CD8-positive, alpha-beta T cell (primary cell): ENCODE measurements at regions of chr15 and their contacts with region 1.

Region 1: GRCh38 chr15:63600616-63601025 is 3.4 kb downstream of the FBXL22 start:
- DNase-seq: peak; percentile 79 to 98 (median 90)
- ATAC-seq: peak; percentile 80
- H3K4me3 ChIP-seq: peak overlapping the region; percentile 87 to 96
- H3K4me3 Mint-ChIP-seq: peak overlapping the region; percentile 94
- H3K27ac ChIP-seq: peak overlapping the region; percentile 75 to 87
- H3K27ac Mint-ChIP-seq: peak overlapping the region; percentile 94
- H3K4me1 ChIP-seq: peaks cover 29% of the 10 kb centered on the region
- H3K4me1 Mint-ChIP-seq: peaks cover 56% of the 10 kb centered on the region
- H3K27me3 ChIP-seq: no peaks in the 10 kb centered on the region
- H3K27me3 Mint-ChIP-seq: no peaks in the 10 kb centered on the region
- CTCF ChIP-seq: no peak

Region 2: DNA sequence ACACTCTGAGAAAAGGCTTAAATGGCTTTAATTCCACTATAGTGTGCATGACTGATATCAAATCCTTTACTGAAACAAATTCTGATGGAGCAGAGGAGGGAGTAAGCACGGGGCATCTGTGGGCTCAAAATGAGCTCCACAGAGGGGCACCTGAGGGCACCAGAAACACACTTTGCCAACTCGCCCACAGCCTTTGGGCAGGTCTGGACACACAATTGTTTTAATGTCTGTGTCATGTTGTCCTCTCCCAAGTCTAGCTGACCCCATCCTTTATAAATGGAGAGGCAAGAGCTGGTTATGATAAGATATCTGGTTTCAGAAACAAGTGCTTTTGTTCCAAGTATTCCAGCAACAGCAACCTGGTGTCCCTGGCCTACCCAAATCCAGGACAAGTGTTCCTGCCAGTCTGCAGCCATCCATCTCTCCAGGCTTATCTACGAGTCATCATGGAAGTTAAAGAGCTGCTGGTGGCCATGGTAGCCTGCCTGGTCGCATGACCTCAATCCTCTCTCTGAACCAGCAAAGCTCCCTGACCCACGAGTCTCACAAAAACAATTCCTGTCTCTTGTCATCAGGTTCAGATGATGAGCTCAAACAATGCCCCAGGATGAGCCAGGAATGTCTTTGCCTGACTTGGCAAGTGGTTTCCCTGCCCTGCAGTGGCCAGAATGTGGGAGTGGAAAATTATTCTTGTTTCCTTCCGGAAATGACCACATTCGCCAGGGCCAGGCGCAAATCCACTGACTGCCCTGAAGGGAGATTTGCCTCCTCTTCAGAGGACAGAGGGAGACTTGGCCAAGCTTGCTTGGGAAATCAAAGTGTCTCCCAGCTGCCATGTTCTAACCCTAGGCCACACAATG is 622.4 kb before region 1 on chr15:
- CTCF ChIA-PET with region 1: no interaction called
- POLR2A ChIA-PET with region 1: no interaction called
- intact Hi-C with region 1: no loop called
- DNase-seq: no peak
- ATAC-seq: no peak
- H3K4me3 ChIP-seq: no peak overlapping the region
- H3K4me3 Mint-ChIP-seq: no peak overlapping the region
- H3K27ac ChIP-seq: no peak overlapping the region
- H3K27ac Mint-ChIP-seq: no peak overlapping the region
- H3K4me1 ChIP-seq: no peaks in the 10 kb centered on the region
- H3K4me1 Mint-ChIP-seq: no peaks in the 10 kb centered on the region
- H3K27me3 ChIP-seq: peaks cover 0 to 3% of the 10 kb centered on the region in 2 experiments
- H3K27me3 Mint-ChIP-seq: peaks cover 9% of the 10 kb centered on the region
- CTCF ChIP-seq: no peak

Region 3: DNA sequence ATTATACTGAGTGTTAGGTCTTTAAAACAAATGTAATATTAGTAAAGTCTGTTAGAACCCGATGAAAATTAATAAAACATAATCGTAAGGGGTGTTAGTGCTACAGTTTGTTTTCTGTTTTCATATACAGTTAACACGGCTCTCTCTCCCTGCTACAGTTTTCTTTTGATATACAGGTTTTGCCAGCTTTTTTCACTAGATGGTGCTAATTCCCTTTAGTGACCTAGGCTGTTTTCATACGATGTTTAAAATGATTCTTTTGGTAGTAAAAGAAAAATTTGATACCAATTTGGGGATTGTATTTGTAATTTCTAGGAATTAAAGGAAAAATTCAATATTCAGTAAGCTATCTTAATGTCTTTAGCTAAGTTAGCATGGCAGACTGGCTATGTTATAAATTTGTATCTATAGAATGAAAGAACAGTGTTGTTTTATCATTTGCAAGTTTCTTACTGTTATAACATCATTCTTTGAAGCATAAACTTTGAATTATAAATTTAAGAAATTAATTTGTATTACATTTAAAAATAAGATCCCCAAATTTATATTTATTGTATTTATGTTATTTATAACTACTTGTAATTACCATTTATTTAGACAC is 311.7 kb before region 1 on chr15:
- CTCF ChIA-PET with region 1: no interaction called
- POLR2A ChIA-PET with region 1: no interaction called
- intact Hi-C with region 1: loop called (anchors 5 to 10 kb)
- DNase-seq: peak in 2 of 9 experiments; percentile 57 to 72
- ATAC-seq: peak; percentile 75
- H3K4me3 ChIP-seq: no peak overlapping the region
- H3K4me3 Mint-ChIP-seq: no peak overlapping the region
- H3K27ac ChIP-seq: peak overlapping the region in 1 of 2 experiments; percentile 0
- H3K27ac Mint-ChIP-seq: no peak overlapping the region
- H3K4me1 ChIP-seq: peaks cover 7% of the 10 kb centered on the region
- H3K4me1 Mint-ChIP-seq: peaks cover 7% of the 10 kb centered on the region
- H3K27me3 ChIP-seq: no peaks in the 10 kb centered on the region
- H3K27me3 Mint-ChIP-seq: no peaks in the 10 kb centered on the region
- CTCF ChIP-seq: peak; percentile 81

Region 4: DNA sequence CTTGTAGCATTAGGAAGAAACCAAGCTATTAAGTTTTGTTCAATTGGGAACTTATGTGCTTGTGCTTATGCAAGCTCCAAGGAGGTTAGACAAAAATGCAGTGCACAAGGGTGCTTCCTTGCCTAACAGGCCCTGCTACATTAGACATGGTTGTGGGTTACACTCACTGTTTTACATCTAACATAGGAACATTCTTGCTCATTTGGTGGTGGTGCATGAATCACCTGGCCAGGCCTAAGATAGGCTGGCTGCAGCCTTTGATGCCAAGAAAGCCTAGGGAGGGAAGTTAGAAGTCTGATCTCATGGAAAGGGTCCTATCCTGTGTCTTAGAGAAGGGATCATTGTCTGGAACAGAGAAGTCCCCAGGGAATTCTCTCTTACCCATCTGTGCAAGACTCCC is 262.5 kb before region 1 on chr15:
- CTCF ChIA-PET with region 1: no interaction called
- POLR2A ChIA-PET with region 1: no interaction called
- intact Hi-C with region 1: no loop called
- DNase-seq: no peak
- ATAC-seq: no peak
- H3K4me3 ChIP-seq: no peak overlapping the region
- H3K4me3 Mint-ChIP-seq: no peak overlapping the region
- H3K27ac ChIP-seq: no peak overlapping the region
- H3K27ac Mint-ChIP-seq: no peak overlapping the region
- H3K4me1 ChIP-seq: no peaks in the 10 kb centered on the region
- H3K4me1 Mint-ChIP-seq: no peaks in the 10 kb centered on the region
- H3K27me3 ChIP-seq: no peaks in the 10 kb centered on the region
- H3K27me3 Mint-ChIP-seq: peaks cover 2% of the 10 kb centered on the region
- CTCF ChIP-seq: no peak

Region 5: GRCh38 chr15:63497642-63498467 is 102.8 kb before region 1 on chr15:
- CTCF ChIA-PET with region 1: interaction called, 3 read pairs
- POLR2A ChIA-PET with region 1: interaction called, 12 read pairs
- intact Hi-C with region 1: no loop called
- DNase-seq: peak; percentile 48 to 95 (median 79)
- ATAC-seq: peak; percentile 69
- H3K4me3 ChIP-seq: peak overlapping the region; percentile 28 to 37
- H3K4me3 Mint-ChIP-seq: no peak overlapping the region
- H3K27ac ChIP-seq: peak overlapping the region; percentile 57 to 94
- H3K27ac Mint-ChIP-seq: no peak overlapping the region
- H3K4me1 ChIP-seq: peaks cover 91% of the 10 kb centered on the region
- H3K4me1 Mint-ChIP-seq: peaks cover 79% of the 10 kb centered on the region
- H3K27me3 ChIP-seq: no peaks in the 10 kb centered on the region
- H3K27me3 Mint-ChIP-seq: no peaks in the 10 kb centered on the region
- CTCF ChIP-seq: no peak

Region 6: DNA sequence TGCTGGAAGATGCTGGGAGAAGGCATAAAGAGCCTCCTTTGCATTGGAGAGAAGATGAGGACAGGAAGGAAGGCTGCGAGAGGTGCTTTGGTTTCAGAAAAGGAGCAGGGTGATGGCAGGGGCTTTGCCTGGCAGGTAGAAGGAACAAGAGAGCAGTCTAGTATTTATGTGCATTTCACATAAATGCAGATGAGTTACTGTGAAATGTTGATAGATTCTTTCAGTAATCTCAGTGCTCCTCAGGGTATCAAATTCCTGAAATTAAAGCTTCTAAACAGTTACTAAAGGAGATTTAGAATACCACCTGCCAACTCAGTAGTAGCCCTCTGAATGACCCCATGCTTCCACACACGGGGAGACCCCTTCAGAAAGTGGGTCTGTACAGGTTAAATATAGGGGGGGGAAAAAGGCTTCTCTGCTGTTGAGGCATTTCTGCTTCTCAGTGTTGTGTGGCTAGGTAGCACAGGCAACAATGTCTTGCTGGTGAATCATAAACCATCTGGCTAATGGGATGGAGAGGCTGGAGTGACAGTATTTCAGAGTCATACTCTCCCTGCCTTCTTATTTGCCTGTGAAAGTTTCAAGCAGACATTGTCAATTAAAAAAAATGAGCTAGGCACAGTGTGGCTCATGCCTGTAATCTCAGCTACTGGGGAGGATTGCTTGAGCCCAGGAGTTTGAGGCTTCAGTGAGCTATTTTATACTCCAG is 17.7 kb before region 1 on chr15:
- CTCF ChIA-PET with region 1: interaction called, 4 read pairs
- POLR2A ChIA-PET with region 1: no interaction called
- intact Hi-C with region 1: loop called in 1 of 2 experiments (anchors 2 kb)
- DNase-seq: no peak
- ATAC-seq: no peak
- H3K4me3 ChIP-seq: no peak overlapping the region
- H3K4me3 Mint-ChIP-seq: no peak overlapping the region
- H3K27ac ChIP-seq: no peak overlapping the region
- H3K27ac Mint-ChIP-seq: peak overlapping the region; percentile 63
- H3K4me1 ChIP-seq: no peaks in the 10 kb centered on the region
- H3K4me1 Mint-ChIP-seq: peaks cover 11% of the 10 kb centered on the region
- H3K27me3 ChIP-seq: no peaks in the 10 kb centered on the region
- H3K27me3 Mint-ChIP-seq: no peaks in the 10 kb centered on the region
- CTCF ChIP-seq: no peak

Region 7: DNA sequence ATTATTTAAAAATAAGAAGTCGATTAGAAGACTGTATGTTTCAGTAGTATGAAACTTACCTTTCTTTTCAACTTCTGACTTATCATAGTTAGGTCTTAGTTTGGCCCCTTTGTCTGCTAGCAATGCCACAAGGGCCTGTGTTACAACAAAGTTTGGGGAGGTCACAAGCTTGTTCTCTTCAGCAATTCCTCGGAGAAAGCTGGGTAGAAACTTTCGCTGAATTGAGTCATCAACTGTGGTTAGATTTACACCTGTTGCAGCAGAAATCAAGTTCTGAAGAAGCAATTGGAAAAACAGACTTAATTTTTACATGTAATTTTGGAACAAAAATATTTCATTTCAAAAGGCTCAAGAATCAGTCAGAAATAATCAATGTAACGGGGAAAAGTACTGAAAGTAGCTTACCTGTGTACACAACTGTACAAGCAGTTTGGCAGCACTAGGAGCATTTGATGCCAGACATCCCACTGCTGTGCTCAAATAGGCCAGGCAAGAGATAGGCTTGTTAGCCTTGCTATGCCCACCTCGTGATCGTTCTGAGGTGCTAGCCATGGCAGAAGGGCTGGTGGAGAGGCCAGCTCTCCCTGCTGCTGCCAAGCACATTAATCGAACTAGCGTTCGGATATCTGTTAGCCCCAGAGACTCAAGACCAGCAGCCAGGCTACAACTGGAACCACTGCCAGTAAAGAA is 55.2 kb after region 1 on chr15:
- CTCF ChIA-PET with region 1: no interaction called
- POLR2A ChIA-PET with region 1: no interaction called
- intact Hi-C with region 1: no loop called
- DNase-seq: no peak
- ATAC-seq: no peak
- H3K4me3 ChIP-seq: no peak overlapping the region
- H3K4me3 Mint-ChIP-seq: no peak overlapping the region
- H3K27ac ChIP-seq: no peak overlapping the region
- H3K27ac Mint-ChIP-seq: no peak overlapping the region
- H3K4me1 ChIP-seq: no peaks in the 10 kb centered on the region
- H3K4me1 Mint-ChIP-seq: no peaks in the 10 kb centered on the region
- H3K27me3 ChIP-seq: no peaks in the 10 kb centered on the region
- H3K27me3 Mint-ChIP-seq: no peaks in the 10 kb centered on the region
- CTCF ChIP-seq: no peak

Region 8: DNA sequence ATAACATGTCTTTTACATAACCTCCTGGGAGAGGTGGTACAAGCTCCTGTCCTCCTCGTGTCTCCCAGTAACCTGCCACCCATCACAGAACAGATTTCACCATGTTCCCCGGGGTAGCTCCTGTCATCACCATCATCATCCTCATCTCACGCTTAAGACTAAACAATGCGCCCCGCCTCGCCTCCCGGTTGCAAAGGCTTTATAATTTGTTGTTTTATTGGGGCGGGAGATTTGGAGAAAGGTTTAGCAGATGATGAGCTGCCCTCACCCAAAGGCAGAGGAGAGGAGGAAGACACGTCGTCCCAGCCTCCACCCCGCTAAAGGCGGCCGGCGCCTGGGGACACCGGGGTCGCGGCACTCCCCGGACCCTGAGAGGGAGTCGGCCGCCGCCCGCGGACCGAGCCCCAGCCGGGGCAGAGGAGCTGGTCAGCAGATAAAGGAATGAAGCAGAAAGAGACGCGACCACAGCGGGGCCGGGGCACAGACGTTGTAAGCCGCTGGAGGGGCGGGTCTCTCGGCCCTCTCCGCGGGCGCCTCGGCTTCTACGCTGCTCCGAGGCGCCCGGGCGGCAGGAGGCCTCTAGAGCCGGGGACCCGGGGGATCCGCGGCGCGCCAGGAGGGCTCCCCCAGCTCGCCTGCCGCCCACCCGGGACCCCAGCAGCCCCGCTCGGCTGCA is 232.5 kb after region 1 on chr15:
- CTCF ChIA-PET with region 1: no interaction called
- POLR2A ChIA-PET with region 1: no interaction called
- intact Hi-C with region 1: loop called in 1 of 2 experiments (anchors 10 kb)
- DNase-seq: peak in 7 of 9 experiments; percentile 10 to 59 (median 28)
- ATAC-seq: peak; percentile 34
- H3K4me3 ChIP-seq: peak overlapping the region; percentile 93 to 99
- H3K4me3 Mint-ChIP-seq: peak overlapping the region; percentile 98
- H3K27ac ChIP-seq: peak overlapping the region; percentile 92 to 98
- H3K27ac Mint-ChIP-seq: peak overlapping the region; percentile 94
- H3K4me1 ChIP-seq: peaks cover 40% of the 10 kb centered on the region
- H3K4me1 Mint-ChIP-seq: peaks cover 56% of the 10 kb centered on the region
- H3K27me3 ChIP-seq: no peaks in the 10 kb centered on the region
- H3K27me3 Mint-ChIP-seq: no peaks in the 10 kb centered on the region
- CTCF ChIP-seq: no peak

Region 9: GRCh38 chr15:64387562-64388168 is 787.0 kb after region 1 on chr15 and contains the start of gene TRIP4:
- CTCF ChIA-PET with region 1: no interaction called
- POLR2A ChIA-PET with region 1: no interaction called
- intact Hi-C with region 1: no loop called
- DNase-seq: peak; percentile 93 to 98 (median 96)
- ATAC-seq: peak; percentile 99
- H3K4me3 ChIP-seq: peak within 1 kb of the TSS; percentile 86 to 98
- H3K4me3 Mint-ChIP-seq: peak within 1 kb of the TSS; percentile 99
- H3K27ac ChIP-seq: peak within 1 kb of the TSS; percentile 51 to 69
- H3K27ac Mint-ChIP-seq: peak within 1 kb of the TSS; percentile 97
- H3K4me1 ChIP-seq: peaks cover 19% of the 10 kb centered on the region
- H3K4me1 Mint-ChIP-seq: peaks cover 21% of the 10 kb centered on the region
- H3K27me3 ChIP-seq: no peaks in the 10 kb centered on the region
- H3K27me3 Mint-ChIP-seq: no peaks in the 10 kb centered on the region
- CTCF ChIP-seq: no peak
- total RNA-seq, gene TRIP4: 10.7 to 11.2 TPM